Right lobe of liver (tissue), 6 donors: ENCODE measurements at regions of chr7 and their contacts with region 1.

Region 1: GRCh38 chr7:44858161-44858560 is 10.3 kb upstream of the H2AZ2 start:
- DNase-seq: no peak
- ATAC-seq: no peak
- H3K4me3 ChIP-seq: no peak overlapping the region
- H3K27ac ChIP-seq: no peak overlapping the region
- H3K4me1 ChIP-seq: no peaks in the 10 kb centered on the region
- H3K27me3 ChIP-seq: no peaks in the 10 kb centered on the region
- CTCF ChIP-seq: peak in 1 of 4 donors; percentile 8
- POLR2A ChIP-seq: no peak

Region 2: DNA sequence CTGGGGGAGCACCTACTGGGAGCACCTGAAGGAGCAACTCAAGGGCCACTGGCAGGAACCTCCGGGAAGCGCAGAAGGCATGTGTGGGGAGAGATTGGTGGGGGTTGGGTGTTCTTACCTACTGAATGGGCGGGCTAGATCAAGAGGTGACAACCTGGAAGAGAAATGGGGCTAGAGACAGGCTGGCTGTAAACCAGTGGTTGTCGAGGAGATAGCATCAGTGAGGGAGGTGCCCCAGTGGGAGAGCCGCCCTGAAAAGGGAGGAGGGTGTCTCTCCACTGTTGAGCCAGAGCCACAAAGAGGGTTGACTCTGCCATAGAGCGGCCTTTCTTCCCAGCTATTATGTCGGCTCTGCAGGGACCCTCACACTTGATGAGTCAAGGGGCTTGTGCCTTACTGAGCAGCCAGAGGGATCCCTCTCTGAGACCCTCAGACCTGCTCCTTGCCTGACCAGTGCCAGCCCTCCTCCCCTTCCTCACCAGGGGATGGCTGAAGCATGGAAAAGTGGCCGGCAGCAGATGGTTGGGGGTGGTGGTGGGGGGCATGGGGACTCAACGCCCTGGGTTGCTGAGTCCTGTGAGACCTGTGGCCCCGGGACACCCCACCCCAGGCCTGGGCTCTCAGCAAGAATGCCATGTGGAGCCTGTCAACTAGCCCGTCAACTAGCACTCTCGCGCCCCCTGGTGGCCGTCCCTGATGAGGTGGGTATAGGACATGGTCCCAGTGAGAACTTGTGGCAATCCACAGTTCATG is 63.6 kb after region 1 on chr7:
- intact Hi-C with region 1: loop called (anchors 5 to 10 kb)
- DNase-seq: peak; percentile 90 to 93 (median 93)
- ATAC-seq: peak; percentile 97 to 100 (median 98)
- H3K4me3 ChIP-seq: no peak overlapping the region
- H3K27ac ChIP-seq: no peak overlapping the region
- H3K4me1 ChIP-seq: no peaks in the 10 kb centered on the region
- H3K27me3 ChIP-seq: no peaks in the 10 kb centered on the region
- CTCF ChIP-seq: peak; percentile 82 to 93 (median 90)
- POLR2A ChIP-seq: no peak

Region 3: DNA sequence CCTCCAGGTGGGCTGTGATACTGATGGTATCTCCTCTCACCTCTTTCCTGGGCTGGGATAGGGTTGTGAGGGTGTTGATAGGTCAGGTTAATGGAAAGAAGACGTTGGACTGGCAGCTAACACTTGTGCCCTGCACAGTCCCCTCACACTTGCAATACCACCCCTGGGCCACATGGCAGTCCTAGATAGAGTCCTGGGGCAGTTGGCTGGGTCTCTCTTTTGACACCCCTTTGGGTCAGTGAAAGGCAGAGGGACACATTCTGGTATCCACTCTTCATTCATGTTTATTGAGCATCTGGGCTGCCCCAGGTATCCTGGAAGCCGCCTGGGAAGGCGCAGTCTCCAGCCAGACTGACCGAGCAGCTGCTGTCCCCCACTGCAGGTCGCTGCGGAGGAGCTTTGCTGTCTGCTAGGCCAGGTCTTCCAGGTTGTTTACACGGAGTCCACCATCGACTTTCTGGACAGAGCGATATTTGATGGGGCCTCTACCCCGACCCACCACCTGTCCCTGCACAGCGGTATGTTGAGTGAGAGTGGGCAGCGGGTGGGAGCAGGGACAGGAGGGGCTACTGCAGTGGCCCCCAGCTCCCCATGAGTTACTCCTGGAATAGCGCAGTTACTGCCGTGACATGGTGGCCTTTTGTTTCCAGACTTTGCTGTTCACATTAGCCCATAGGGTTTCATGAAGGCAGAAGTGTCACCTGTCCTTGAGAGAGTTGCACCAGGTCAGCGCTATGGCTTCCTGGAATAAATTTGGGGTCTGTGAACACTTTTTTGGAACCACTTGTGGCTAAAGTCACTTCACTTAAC is 211.5 kb after region 1 on chr7:
- intact Hi-C with region 1: no loop called
- DNase-seq: no peak
- ATAC-seq: no peak
- H3K4me3 ChIP-seq: no peak overlapping the region
- H3K27ac ChIP-seq: no peak overlapping the region
- H3K4me1 ChIP-seq: no peaks in the 10 kb centered on the region
- H3K27me3 ChIP-seq: no peaks in the 10 kb centered on the region
- CTCF ChIP-seq: no peak
- POLR2A ChIP-seq: no peak

Region 4: GRCh38 chr7:45136106-45137060 is 278.2 kb after region 1 on chr7:
- intact Hi-C with region 1: loop called in 1 of 2 experiments (anchors 10 kb)
- DNase-seq: peak in 1 of 3 donors; percentile 64
- ATAC-seq: peak; percentile 77 to 92 (median 88)
- H3K4me3 ChIP-seq: no peak overlapping the region
- H3K27ac ChIP-seq: no peak overlapping the region
- H3K4me1 ChIP-seq: peaks cover 0 to 8% (median 0%) of the 10 kb centered on the region in 4 donors
- H3K27me3 ChIP-seq: no peaks in the 10 kb centered on the region
- CTCF ChIP-seq: peak; percentile 81 to 88 (median 82)
- POLR2A ChIP-seq: no peak